CD8-positive, alpha-beta T cell (primary cell): ENCODE measurements at regions of chr2 and their contacts with region 1.

Region 1: GRCh38 chr2:231514103-231514950 is 15.9 kb downstream of the NMUR1 start:
- DNase-seq: peak; percentile 96 to 99 (median 98)
- ATAC-seq: peak; percentile 97
- H3K4me3 ChIP-seq: peak overlapping the region; percentile 86 to 88
- H3K4me3 Mint-ChIP-seq: peak overlapping the region; percentile 90
- H3K27ac ChIP-seq: peak overlapping the region; percentile 85 to 94
- H3K27ac Mint-ChIP-seq: peak overlapping the region; percentile 97
- H3K4me1 ChIP-seq: peaks cover 13% of the 10 kb centered on the region
- H3K4me1 Mint-ChIP-seq: peaks cover 18% of the 10 kb centered on the region
- H3K27me3 ChIP-seq: no peaks in the 10 kb centered on the region
- H3K27me3 Mint-ChIP-seq: no peaks in the 10 kb centered on the region
- CTCF ChIP-seq: no peak

Region 2: DNA sequence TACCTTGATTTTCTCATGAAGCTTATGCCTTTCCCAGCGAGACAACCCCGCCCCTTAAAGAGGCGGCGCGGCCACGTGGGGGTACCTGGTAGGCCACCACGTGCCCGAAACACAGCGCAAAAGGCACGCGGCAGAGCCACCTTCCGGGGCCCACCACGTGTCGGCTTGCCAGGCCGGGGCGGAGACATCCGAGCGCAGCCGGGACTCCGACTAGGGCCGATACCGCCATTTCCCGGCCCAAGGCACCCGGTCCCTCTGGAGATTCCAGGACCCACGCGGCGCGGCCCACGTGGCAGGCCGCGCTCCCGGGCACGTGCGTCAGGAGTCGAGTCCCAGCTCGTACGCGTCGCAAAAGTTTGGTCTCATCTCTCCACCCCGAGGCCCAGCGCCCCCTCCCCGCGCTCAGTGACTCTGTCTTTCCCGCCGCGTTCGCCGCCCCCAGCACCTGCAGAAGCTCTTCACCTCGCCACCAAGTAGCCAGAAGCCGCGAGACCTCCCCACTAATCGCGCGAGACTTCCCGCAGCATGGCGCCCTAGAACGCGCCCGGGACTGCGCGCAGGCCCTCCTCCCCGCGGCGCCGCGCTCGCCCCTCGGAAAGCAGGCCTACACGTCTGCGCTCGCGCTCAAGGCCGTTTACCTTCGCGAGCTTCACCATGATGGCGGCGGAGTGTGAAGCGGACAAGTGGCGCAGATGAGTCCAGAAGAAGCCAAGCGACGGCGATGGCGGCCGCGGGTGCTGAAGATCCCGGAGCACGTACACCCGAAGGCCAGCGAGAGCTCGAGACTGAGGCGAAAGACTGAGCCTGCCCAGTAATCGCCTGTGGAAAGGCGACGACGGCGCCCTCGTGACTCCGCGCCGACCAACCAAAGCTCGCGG is 50.4 kb before region 1 on chr2 and contains the start of gene NCL:
- CTCF ChIA-PET with region 1: interaction called, 4 read pairs
- POLR2A ChIA-PET with region 1: interaction called, 28 read pairs
- intact Hi-C with region 1: loop called (anchors 1 kb)
- DNase-seq: peak; percentile 71 to 94 (median 82)
- ATAC-seq: peak; percentile 62
- H3K4me3 ChIP-seq: peak within 1 kb of the TSS; percentile 97
- H3K4me3 Mint-ChIP-seq: peak within 1 kb of the TSS; percentile 96
- H3K27ac ChIP-seq: peak within 1 kb of the TSS; percentile 97 to 98
- H3K27ac Mint-ChIP-seq: peak within 1 kb of the TSS; percentile 100
- H3K4me1 ChIP-seq: peaks cover 36% of the 10 kb centered on the region
- H3K4me1 Mint-ChIP-seq: peaks cover 52% of the 10 kb centered on the region
- H3K27me3 ChIP-seq: no peaks in the 10 kb centered on the region
- H3K27me3 Mint-ChIP-seq: no peaks in the 10 kb centered on the region
- CTCF ChIP-seq: no peak
- total RNA-seq, gene NCL: 390 to 394 TPM

Region 3: DNA sequence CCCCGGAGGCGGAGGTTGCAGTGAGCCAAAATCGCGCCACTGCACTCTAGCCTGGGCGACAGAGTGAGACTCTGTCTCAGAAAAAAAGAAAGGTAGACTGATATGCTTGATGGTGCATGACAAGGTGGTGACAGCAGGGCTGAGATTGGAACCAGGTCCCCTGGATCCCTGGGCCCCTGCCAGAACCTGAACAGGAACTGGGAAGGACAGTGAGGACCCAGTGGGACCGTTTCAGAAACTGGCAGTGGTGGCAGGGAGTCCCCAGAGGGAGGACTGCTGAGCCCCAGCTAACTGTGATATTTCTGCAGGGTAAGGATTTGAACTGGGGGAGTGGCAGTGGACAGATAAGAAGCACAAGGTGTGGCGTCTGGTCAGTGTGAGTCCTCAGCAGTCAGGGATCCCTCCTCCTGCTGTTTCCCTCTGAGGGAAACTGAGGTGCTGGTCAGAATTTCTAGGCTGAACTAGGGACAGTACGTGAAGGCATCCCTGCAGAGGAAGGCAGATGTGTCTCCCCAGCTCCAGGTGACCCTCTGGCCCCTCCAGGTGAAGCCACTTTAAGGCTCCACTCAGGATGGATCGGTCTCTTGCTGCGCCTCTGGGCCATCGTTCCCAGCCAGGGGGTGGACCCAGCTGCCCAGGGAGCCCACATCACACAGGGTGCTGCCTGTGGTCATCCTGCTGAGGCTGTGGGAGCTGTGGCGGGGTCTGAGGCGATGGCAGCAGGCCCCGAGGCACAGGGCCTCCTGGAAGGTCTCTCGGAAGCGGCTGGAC is 10.3 kb after region 1 on chr2:
- CTCF ChIA-PET with region 1: interaction called, 14 read pairs
- POLR2A ChIA-PET with region 1: interaction called, 3 read pairs
- intact Hi-C with region 1: no loop called
- DNase-seq: no peak
- ATAC-seq: no peak
- H3K4me3 ChIP-seq: no peak overlapping the region
- H3K4me3 Mint-ChIP-seq: peak overlapping the region; percentile 39
- H3K27ac ChIP-seq: peak overlapping the region in 1 of 2 experiments; percentile 69
- H3K27ac Mint-ChIP-seq: peak overlapping the region; percentile 71
- H3K4me1 ChIP-seq: peaks cover 34% of the 10 kb centered on the region
- H3K4me1 Mint-ChIP-seq: peaks cover 38% of the 10 kb centered on the region
- H3K27me3 ChIP-seq: no peaks in the 10 kb centered on the region
- H3K27me3 Mint-ChIP-seq: no peaks in the 10 kb centered on the region
- CTCF ChIP-seq: no peak

Region 4: DNA sequence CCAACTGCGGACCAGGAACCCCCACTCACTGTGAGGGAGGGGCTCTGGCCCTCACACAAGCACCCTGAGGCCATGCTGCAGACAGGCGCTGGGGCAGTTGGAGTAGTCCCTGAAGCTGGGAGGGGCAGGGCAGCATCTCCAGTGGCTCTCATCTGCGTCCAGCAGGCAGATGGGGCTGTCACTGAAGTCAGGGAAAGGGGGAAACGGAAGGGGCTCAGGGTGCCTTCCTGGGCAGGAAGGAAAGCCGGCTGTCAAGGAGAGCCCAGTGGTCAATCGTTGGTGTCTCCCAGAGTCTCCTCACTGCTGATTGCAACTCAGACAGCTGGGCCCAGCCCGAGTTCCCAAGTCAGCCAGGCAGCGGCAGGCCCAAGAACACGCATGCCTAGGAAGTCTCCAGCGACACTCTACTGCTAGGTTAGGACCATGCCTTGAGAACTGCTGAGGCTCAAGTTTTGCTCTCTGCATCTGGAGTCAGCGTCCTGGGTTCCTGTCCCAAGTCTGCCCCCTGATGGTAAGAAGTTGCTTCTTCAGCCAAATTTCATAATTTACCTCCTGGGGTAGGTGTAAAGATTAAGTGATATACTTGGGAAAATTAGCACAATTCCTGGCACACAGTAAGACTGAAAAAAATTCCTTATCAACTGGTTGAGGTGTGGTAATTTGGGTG is 43.4 kb after region 1 on chr2:
- CTCF ChIA-PET with region 1: interaction called, 22 read pairs
- POLR2A ChIA-PET with region 1: interaction called, 6 read pairs
- intact Hi-C with region 1: loop called (anchors 1 kb)
- DNase-seq: peak; percentile 29 to 91 (median 64)
- ATAC-seq: peak; percentile 96
- H3K4me3 ChIP-seq: no peak overlapping the region
- H3K4me3 Mint-ChIP-seq: no peak overlapping the region
- H3K27ac ChIP-seq: peak overlapping the region in 1 of 2 experiments; percentile 45
- H3K27ac Mint-ChIP-seq: peak overlapping the region; percentile 67
- H3K4me1 ChIP-seq: peaks cover 20% of the 10 kb centered on the region
- H3K4me1 Mint-ChIP-seq: peaks cover 25% of the 10 kb centered on the region
- H3K27me3 ChIP-seq: no peaks in the 10 kb centered on the region
- H3K27me3 Mint-ChIP-seq: no peaks in the 10 kb centered on the region
- CTCF ChIP-seq: peak; percentile 66

Region 5: GRCh38 chr2:231662028-231662810 is 147.9 kb after region 1 on chr2:
- CTCF ChIA-PET with region 1: no interaction called
- POLR2A ChIA-PET with region 1: interaction called, 3 read pairs
- intact Hi-C with region 1: loop called in 1 of 2 experiments (anchors 5 kb)
- DNase-seq: peak; percentile 94 to 99 (median 96)
- ATAC-seq: peak; percentile 91
- H3K4me3 ChIP-seq: peak overlapping the region; percentile 60 to 82
- H3K4me3 Mint-ChIP-seq: peak overlapping the region; percentile 77
- H3K27ac ChIP-seq: peak overlapping the region; percentile 87 to 94
- H3K27ac Mint-ChIP-seq: peak overlapping the region; percentile 97
- H3K4me1 ChIP-seq: peaks cover 16% of the 10 kb centered on the region
- H3K4me1 Mint-ChIP-seq: peaks cover 14% of the 10 kb centered on the region
- H3K27me3 ChIP-seq: no peaks in the 10 kb centered on the region
- H3K27me3 Mint-ChIP-seq: no peaks in the 10 kb centered on the region
- CTCF ChIP-seq: no peak

Region 6: GRCh38 chr2:232550354-232551249 is 1036.3 kb after region 1 on chr2 and contains the starts of genes EIF4E2 and TIGD1:
- CTCF ChIA-PET with region 1: no interaction called
- POLR2A ChIA-PET with region 1: no interaction called
- intact Hi-C with region 1: loop called in 1 of 2 experiments (anchors 10 kb)
- DNase-seq: peak; percentile 78 to 94 (median 91)
- ATAC-seq: peak; percentile 82
- H3K4me3 ChIP-seq: peak within 1 kb of the TSS; percentile 74 to 91
- H3K4me3 Mint-ChIP-seq: peak within 1 kb of the TSS; percentile 100
- H3K27ac ChIP-seq: peak within 1 kb of the TSS; percentile 86 to 88
- H3K27ac Mint-ChIP-seq: peak within 1 kb of the TSS; percentile 100
- H3K4me1 ChIP-seq: peaks cover 28% of the 10 kb centered on the region
- H3K4me1 Mint-ChIP-seq: peaks cover 80% of the 10 kb centered on the region
- H3K27me3 ChIP-seq: no peaks in the 10 kb centered on the region
- H3K27me3 Mint-ChIP-seq: no peaks in the 10 kb centered on the region
- CTCF ChIP-seq: peak; percentile 55
- total RNA-seq, gene EIF4E2: 53.8 to 55.2 TPM
- total RNA-seq, gene TIGD1: 16.5 to 17.2 TPM